Sciatic nerve (tissue), 2 donors: ENCODE measurements at regions of chr3 and their contacts with region 1.

Region 1: DNA sequence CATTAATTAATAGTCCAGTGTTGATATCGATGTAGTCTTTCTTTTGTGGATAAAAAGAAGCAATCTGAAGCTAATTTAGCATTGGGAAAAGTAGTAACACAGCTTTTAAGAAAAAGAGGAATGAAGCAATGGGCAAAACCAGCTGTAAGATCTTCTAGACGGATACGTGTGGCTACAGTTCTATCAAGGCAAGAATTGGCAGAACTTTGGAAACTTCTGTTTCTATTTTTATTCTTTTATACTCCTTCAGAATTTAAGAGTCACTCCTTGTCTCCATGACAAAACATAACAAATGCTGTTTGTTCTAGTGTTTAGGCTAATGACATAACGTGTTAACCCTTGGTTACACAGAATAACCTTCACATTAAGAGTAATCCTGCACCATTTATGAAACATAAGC is 289.2 kb downstream of the ROBO2 start:
- DNase-seq: no peak
- ATAC-seq: peak; percentile 58

Region 2: DNA sequence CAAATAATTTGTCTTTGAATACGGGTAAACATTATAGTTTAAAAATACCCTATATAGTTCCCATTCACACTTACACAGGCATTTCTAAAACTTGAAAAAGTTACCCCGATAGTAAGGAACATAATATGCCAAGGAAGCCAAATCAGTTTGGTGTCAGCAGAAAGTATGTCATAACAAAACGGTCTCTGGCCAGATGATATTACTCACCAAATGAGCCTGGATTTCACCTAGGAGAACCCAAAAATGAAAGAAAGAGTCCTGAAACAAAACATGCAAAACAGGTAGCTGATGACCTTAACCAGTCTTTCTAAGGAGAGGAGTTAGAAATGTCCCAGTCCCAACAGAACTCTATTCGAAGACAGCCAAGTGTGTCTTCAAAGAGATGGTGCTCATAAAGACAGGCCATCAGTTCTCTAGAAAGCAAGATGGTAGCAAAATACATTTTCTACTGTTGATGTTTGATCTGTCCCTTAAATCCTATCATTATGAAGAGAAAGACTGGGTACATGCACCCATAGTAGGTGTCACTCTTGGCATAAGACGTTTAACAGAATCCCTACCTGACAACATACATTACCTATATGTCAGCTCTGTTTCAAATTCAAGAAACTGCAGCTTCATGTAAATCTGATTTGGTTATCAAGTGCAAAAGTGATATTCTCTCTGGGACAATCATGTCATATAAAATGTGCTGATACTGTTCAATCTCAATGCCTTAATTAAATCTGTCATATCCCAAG is 1496.2 kb after region 1 on chr3:
- intact Hi-C with region 1: loop called (anchors 5 kb)
- DNase-seq: no peak
- ATAC-seq: no peak